ENCODE measurements at regions of chr2 and their contacts with region 1.

Region 1: DNA sequence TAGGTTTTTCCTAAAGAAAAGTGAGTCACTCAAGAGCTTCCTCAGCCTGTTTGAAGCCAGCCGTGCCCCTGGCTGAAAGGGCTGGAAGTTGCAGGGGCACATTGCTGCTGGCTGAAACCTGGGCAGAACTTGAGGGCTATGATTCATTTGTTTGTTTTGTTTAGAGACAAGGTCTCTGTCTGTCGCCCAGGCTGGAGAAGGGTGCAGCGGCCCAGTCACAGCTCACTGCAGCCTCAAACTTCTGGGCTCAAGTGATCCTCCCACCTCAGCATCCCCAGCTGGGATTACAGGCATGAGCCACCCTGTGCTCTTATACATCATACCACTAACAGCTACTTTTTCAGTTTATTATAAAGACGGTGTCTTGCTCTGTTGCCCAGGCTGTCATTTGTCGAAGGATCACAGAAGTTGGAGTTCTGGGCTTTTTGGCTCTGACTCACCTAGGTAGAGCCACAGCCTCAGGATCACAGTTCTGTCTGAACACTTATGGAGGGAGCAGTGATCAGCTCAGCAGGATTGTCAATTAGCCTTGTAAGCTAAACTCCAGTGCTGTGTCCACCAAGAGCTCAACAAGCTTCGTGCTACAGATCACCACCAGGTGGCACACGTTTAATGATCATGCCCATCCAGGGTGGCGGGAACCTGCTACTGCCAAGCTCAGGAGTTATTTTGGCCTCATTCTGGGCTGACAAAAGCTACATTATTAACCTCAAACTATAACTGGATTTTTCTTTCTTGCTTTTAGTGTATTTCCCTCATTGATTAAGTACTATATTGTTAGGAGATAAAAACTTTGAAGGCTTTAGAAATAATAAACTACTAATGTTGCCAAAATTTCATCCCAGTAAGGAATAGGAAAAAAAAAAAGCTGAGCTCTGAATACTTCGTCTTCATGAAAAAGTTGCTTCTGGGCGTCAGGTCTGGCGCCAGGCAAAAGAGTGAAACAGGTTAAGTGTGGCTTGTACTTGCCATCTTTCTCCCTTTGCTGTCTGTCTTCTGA is 57.9 kb downstream of the ARHGEF33 start:
- DNase-seq: peak in 8 of 9 experiments; percentile 39 to 73 (median 56)
- ATAC-seq: no peak
- H3K4me3 ChIP-seq: no peak overlapping the region
- H3K4me3 Mint-ChIP-seq: no peak overlapping the region
- H3K27ac ChIP-seq: no peak overlapping the region
- H3K27ac Mint-ChIP-seq: no peak overlapping the region
- H3K4me1 ChIP-seq: no peaks in the 10 kb centered on the region
- H3K4me1 Mint-ChIP-seq: no peaks in the 10 kb centered on the region
- H3K27me3 ChIP-seq: no peaks in the 10 kb centered on the region
- H3K27me3 Mint-ChIP-seq: no peaks in the 10 kb centered on the region
- CTCF ChIP-seq: peak; percentile 44

Region 2: DNA sequence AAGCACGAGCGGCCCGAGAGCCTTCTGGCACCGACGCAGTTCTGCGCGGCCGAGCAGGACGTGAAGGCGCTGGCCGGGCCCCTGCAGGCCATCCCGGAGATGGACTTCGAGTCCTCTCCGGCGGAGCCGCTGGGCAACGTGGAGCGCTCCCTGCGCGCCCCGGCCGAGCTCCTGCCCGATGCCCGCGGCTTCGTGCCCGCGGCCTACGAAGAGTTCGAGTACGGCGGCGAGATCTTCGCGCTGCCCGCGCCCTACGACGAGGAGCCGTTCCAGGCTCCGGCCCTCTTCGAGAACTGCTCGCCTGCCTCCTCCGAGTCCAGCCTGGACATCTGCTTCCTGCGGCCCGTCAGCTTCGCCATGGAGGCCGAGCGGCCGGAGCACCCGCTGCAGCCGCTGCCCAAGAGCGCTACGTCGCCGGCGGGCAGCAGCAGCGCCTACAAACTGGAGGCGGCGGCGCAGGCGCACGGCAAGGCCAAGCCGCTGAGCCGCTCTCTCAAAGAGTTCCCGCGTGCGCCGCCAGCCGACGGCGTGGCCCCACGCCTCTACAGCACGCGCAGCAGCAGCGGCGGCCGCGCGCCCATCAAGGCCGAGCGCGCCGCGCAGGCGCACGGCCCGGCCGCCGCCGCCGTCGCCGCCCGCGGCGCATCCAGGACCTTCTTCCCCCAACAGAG is 12.5 kb after region 1 on chr2:
- CTCF ChIA-PET with region 1: interaction called, 15 read pairs
- POLR2A ChIA-PET with region 1: no interaction called
- intact Hi-C with region 1: no loop called
- DNase-seq: peak; percentile 32 to 83 (median 52)
- ATAC-seq: peak; percentile 95
- H3K4me3 ChIP-seq: peak overlapping the region; percentile 34 to 37
- H3K4me3 Mint-ChIP-seq: peak overlapping the region; percentile 60
- H3K27ac ChIP-seq: no peak overlapping the region
- H3K27ac Mint-ChIP-seq: no peak overlapping the region
- H3K4me1 ChIP-seq: peaks cover 13% of the 10 kb centered on the region
- H3K4me1 Mint-ChIP-seq: peaks cover 4% of the 10 kb centered on the region
- H3K27me3 ChIP-seq: peaks cover 5 to 10% of the 10 kb centered on the region in 2 experiments
- H3K27me3 Mint-ChIP-seq: peaks cover 33% of the 10 kb centered on the region
- CTCF ChIP-seq: no peak

Region 3: GRCh38 chr2:39059366-39059952 is 111.9 kb after region 1 on chr2:
- CTCF ChIA-PET with region 1: interaction called, 10 read pairs
- POLR2A ChIA-PET with region 1: no interaction called
- intact Hi-C with region 1: loop called (anchors 5 kb)
- DNase-seq: peak in 2 of 9 experiments; percentile 63 to 74
- ATAC-seq: no peak
- H3K4me3 ChIP-seq: no peak overlapping the region
- H3K4me3 Mint-ChIP-seq: no peak overlapping the region
- H3K27ac ChIP-seq: no peak overlapping the region
- H3K27ac Mint-ChIP-seq: peak overlapping the region; percentile 16
- H3K4me1 ChIP-seq: no peaks in the 10 kb centered on the region
- H3K4me1 Mint-ChIP-seq: peaks cover 3% of the 10 kb centered on the region
- H3K27me3 ChIP-seq: no peaks in the 10 kb centered on the region
- H3K27me3 Mint-ChIP-seq: no peaks in the 10 kb centered on the region
- CTCF ChIP-seq: peak; percentile 97

Measured in CD8-positive, alpha-beta T cell (primary cell).